CD8-positive, alpha-beta T cell (primary cell): ENCODE measurements at regions of chr1 and their contacts with region 1.

Region 1: DNA sequence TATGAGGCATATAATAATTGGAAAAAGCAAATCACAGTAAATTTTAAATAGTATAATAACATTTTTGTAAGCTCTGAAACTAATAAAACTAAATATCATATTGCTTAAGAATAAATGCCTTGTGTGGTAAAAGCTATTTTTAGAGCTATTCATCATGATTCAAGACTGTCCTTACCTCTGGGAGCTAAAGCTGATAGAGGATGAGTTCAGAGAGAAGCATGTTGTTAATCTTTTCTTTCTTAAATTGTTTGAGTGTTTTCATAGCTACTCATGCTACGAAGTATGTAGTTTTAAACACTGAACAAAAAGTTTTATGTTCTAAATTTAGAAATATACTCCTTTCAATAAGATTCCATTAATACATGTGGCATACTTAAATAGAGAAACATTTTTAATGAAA is 30.5 kb downstream of the IFI16 start:
- DNase-seq: no peak
- ATAC-seq: no peak
- H3K4me3 ChIP-seq: no peak overlapping the region
- H3K4me3 Mint-ChIP-seq: no peak overlapping the region
- H3K27ac ChIP-seq: no peak overlapping the region
- H3K27ac Mint-ChIP-seq: no peak overlapping the region
- H3K4me1 ChIP-seq: no peaks in the 10 kb centered on the region
- H3K4me1 Mint-ChIP-seq: peaks cover 34% of the 10 kb centered on the region
- H3K27me3 ChIP-seq: no peaks in the 10 kb centered on the region
- H3K27me3 Mint-ChIP-seq: no peaks in the 10 kb centered on the region
- CTCF ChIP-seq: no peak

Region 2: DNA sequence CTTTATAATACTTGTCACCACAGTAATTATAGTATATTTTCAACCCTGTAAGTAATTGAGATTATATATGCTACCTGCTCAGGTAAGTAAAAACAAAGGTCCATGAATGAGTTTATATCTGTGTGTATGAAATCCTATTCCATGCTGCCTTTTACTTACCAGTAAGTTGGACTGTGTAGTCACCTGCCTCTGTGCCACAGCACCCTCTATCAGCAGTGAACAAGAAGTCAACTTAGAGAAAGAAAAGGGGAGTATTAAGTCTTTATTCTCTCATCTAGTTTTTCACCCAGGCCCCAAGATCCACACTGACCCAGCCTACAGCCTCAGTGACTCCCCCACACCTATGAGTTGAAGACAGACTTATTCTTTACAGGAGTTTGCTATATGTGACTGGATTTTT is 67.4 kb before region 1 on chr1:
- CTCF ChIA-PET with region 1: no interaction called
- POLR2A ChIA-PET with region 1: no interaction called
- intact Hi-C with region 1: no loop called
- DNase-seq: peak in 2 of 9 experiments; percentile 31 to 47
- ATAC-seq: no peak
- H3K4me3 ChIP-seq: no peak overlapping the region
- H3K4me3 Mint-ChIP-seq: no peak overlapping the region
- H3K27ac ChIP-seq: peak overlapping the region in 1 of 2 experiments; percentile 1
- H3K27ac Mint-ChIP-seq: no peak overlapping the region
- H3K4me1 ChIP-seq: no peaks in the 10 kb centered on the region
- H3K4me1 Mint-ChIP-seq: peaks cover 3% of the 10 kb centered on the region
- H3K27me3 ChIP-seq: no peaks in the 10 kb centered on the region
- H3K27me3 Mint-ChIP-seq: no peaks in the 10 kb centered on the region
- CTCF ChIP-seq: no peak

Region 3: GRCh38 chr1:159015440-159015909 is 24.7 kb before region 1 on chr1:
- CTCF ChIA-PET with region 1: no interaction called
- POLR2A ChIA-PET with region 1: interaction called, 3 read pairs
- intact Hi-C with region 1: loop called in 1 of 2 experiments (anchors 2 kb)
- DNase-seq: peak; percentile 16 to 85 (median 69)
- ATAC-seq: peak; percentile 92
- H3K4me3 ChIP-seq: no peak overlapping the region
- H3K4me3 Mint-ChIP-seq: peak overlapping the region; percentile 72
- H3K27ac ChIP-seq: peak overlapping the region in 1 of 2 experiments; percentile 73
- H3K27ac Mint-ChIP-seq: peak overlapping the region; percentile 84
- H3K4me1 ChIP-seq: peaks cover 42% of the 10 kb centered on the region
- H3K4me1 Mint-ChIP-seq: peaks cover 75% of the 10 kb centered on the region
- H3K27me3 ChIP-seq: no peaks in the 10 kb centered on the region
- H3K27me3 Mint-ChIP-seq: no peaks in the 10 kb centered on the region
- CTCF ChIP-seq: no peak

Region 4: GRCh38 chr1:159056069-159056698 is 16.0 kb after region 1 on chr1:
- CTCF ChIA-PET with region 1: no interaction called
- POLR2A ChIA-PET with region 1: interaction called, 3 read pairs
- intact Hi-C with region 1: loop called in 1 of 2 experiments (anchors 2 kb)
- DNase-seq: peak in 1 of 9 experiments; percentile 21
- ATAC-seq: no peak
- H3K4me3 ChIP-seq: no peak overlapping the region
- H3K4me3 Mint-ChIP-seq: no peak overlapping the region
- H3K27ac ChIP-seq: peak overlapping the region in 1 of 2 experiments; percentile 51
- H3K27ac Mint-ChIP-seq: peak overlapping the region; percentile 53
- H3K4me1 ChIP-seq: no peaks in the 10 kb centered on the region
- H3K4me1 Mint-ChIP-seq: peaks cover 20% of the 10 kb centered on the region
- H3K27me3 ChIP-seq: no peaks in the 10 kb centered on the region
- H3K27me3 Mint-ChIP-seq: no peaks in the 10 kb centered on the region
- CTCF ChIP-seq: no peak